PC-3 (cell line): ENCODE measurements at regions of chr16 and their contacts with region 1.

Region 1: GRCh38 chr16:76796416-76796815 is 394.6 kb upstream of the MON1B start:
- DNase-seq: peak; percentile 58
- ATAC-seq: peak; percentile 59
- H3K4me3 ChIP-seq: peak overlapping the region; percentile 54; the same call in 1 of the 2 replicates
- H3K27ac ChIP-seq: peak overlapping the region; percentile 93
- H3K4me1 ChIP-seq: peaks cover 25% of the 10 kb centered on the region
- H3K27me3 ChIP-seq: no peaks in the 10 kb centered on the region
- CTCF ChIP-seq: no peak

Region 2: DNA sequence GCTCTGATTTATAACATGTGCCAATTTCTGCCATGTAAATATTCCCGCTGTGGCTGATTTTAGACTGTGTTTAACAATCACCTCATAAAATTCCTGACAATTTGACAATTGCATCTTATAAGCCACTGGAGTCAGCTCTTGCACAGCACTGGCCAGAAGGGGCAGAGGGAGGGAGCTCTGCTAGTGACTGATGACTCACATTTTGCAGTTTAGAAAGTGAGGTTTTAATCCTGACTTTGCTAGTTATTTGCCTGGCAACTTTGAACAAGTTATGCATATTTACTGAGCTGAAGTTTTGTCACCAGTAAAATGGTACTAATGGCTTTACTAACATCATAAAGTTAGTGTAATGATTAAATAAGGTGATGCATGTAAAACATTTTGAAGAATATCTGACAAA is 66.9 kb before region 1 on chr16:
- CTCF ChIA-PET with region 1: no interaction called
- POLR2A ChIA-PET with region 1: no interaction called
- intact Hi-C with region 1: loop called (anchors 5 kb)
- DNase-seq: peak; percentile 78
- ATAC-seq: peak; percentile 97
- H3K4me3 ChIP-seq: no peak overlapping the region
- H3K27ac ChIP-seq: peak overlapping the region; percentile 43
- H3K4me1 ChIP-seq: peaks cover 14% of the 10 kb centered on the region
- H3K27me3 ChIP-seq: no peaks in the 10 kb centered on the region
- CTCF ChIP-seq: 0 out of 2 replicates have a peak, but pooled peaks have one; percentile 29

Region 3: DNA sequence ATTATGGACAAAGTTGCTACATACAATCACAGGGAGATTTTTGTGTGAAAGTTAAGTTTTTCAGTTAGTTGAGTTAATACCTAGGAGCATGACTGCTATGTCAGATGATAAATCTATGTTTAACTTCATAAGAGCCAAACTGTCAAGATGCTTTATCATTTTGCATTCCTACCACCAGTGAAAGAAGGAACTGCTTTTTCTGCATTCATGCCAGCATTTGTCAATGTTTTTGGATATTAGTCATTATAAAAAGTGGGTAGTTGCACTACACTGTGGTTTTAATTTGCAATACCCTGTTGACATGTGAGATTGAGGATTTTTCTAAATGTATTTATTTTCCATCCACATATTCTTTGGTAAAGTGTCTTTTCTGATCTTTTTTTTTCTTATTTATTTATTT is 39.5 kb before region 1 on chr16:
- CTCF ChIA-PET with region 1: no interaction called
- POLR2A ChIA-PET with region 1: no interaction called
- intact Hi-C with region 1: loop called (anchors 5 kb)
- DNase-seq: peak; percentile 59
- ATAC-seq: peak; percentile 31; the same call in 1 of the 2 replicates
- H3K4me3 ChIP-seq: no peak overlapping the region
- H3K27ac ChIP-seq: peak overlapping the region; percentile 46
- H3K4me1 ChIP-seq: peaks cover 7% of the 10 kb centered on the region; the same call in 1 of the 2 replicates
- H3K27me3 ChIP-seq: no peaks in the 10 kb centered on the region
- CTCF ChIP-seq: no peak

Region 4: DNA sequence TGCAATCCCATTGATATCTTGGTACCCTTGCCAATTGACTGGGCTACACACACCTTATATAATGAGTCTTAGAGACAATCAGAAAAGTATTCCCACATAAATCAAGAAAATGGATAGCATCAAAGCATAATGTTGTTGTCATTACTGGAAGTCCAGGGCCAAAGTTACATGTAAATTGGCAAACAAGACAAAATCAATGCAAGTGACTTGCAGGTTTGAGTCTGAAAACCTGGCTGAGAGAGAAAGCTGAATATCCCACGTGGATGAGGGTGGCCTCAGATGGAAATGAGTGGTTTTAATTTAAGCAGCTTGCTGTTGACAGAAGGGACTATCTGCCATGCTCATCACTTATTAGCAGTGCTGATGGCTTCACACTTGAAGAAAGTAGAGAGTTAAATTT is 70.6 kb after region 1 on chr16:
- CTCF ChIA-PET with region 1: no interaction called
- POLR2A ChIA-PET with region 1: no interaction called
- intact Hi-C with region 1: no loop called
- DNase-seq: no peak
- ATAC-seq: no peak
- H3K4me3 ChIP-seq: no peak overlapping the region
- H3K27ac ChIP-seq: no peak overlapping the region
- H3K4me1 ChIP-seq: no peaks in the 10 kb centered on the region
- H3K27me3 ChIP-seq: no peaks in the 10 kb centered on the region
- CTCF ChIP-seq: no peak